Cardiac septum (tissue), 1 donor: ENCODE measurements at regions of chr1 and their contacts with region 1.

Region 1: DNA sequence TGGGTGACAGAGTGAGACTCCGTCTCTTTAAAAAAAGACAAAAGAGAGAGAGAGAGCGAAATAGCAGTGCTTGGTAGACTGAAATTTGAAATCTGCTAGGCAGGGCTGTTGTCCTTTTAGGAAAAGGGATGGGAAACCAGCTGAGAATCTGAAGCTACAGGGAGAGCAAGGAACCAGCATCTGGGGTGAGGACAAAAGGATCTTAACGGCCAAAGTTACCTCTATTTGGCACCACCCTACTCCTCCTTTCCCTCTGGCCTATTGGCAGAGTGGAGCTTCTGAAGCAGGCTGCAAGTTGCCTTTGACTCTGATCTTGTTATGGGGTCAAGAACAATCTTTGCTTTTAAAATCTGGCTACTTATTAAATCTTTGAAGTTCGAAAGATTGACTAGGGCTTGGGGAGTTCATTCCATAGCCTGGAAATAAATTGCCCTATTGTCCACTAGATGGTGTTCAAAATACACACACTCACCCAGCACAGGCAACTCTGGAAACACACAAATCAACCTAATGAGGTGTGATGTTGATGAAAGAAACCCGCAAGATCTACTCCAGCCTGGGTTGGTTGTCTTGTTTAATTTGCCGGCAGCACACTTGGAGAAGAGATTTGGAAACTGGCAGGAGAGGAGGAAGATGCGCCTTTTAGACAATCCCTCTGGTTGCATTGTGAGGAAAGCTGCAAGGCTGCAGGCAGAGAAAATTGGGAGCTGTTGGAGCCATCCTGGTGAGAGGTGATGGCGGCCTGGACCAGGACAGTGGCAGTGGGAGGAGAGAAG is 16.5 kb upstream of the PARP1 start:
- DNase-seq: no peak

Region 2: GRCh38 chr1:226149806-226150205 is 274.6 kb before region 1 on chr1:
- intact Hi-C with region 1: no loop called
- DNase-seq: no peak

Region 3: GRCh38 chr1:226532553-226532952 is 108.1 kb after region 1 on chr1:
- intact Hi-C with region 1: loop called (anchors 5 kb)
- DNase-seq: no peak

Region 4: DNA sequence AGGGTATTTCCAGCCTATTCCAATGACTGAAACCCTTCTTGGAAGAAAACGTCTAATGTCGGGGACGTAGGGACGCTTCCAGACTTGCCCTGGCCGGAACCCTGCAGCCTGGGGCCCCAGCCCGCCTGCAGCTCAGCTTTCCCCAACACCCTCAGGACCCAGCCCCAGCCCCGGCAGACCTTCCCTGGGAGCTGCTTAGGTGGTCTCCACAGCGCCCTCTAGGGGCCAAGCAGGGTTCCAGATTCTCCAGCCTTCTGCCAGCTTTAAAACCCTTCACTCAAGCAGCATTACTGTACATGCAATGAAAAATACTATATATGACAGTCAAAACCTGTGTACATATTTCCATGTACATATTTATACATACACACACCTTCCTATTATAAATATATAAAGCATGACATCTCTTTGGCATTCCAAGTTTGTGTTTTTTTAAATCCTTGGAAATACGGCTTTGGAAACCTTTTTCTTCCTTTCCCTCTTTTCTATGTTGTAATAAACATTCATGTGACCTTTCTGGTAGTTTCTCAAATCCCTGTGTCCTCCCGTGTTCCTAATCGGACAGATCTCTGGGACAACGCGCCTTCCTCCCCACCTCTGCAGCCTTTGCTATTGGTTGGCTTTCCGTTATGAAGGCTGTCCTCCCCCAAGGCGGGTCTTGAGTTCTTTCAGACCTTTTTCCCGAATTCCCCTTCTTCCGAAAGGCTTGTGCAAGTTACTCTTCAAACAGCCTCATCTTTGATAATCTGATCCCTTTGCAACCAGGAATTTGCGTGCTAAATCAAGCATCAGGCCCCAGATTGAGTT is 184.5 kb after region 1 on chr1:
- intact Hi-C with region 1: loop called (anchors 5 kb)
- DNase-seq: peak; percentile 81

Region 5: GRCh38 chr1:226827968-226828513 is 403.6 kb after region 1 on chr1:
- intact Hi-C with region 1: loop called (anchors 10 kb)
- DNase-seq: peak; percentile 97